Spleen (tissue), 13 donors: ENCODE measurements at regions of chr12 and their contacts with region 1.

Region 1: DNA sequence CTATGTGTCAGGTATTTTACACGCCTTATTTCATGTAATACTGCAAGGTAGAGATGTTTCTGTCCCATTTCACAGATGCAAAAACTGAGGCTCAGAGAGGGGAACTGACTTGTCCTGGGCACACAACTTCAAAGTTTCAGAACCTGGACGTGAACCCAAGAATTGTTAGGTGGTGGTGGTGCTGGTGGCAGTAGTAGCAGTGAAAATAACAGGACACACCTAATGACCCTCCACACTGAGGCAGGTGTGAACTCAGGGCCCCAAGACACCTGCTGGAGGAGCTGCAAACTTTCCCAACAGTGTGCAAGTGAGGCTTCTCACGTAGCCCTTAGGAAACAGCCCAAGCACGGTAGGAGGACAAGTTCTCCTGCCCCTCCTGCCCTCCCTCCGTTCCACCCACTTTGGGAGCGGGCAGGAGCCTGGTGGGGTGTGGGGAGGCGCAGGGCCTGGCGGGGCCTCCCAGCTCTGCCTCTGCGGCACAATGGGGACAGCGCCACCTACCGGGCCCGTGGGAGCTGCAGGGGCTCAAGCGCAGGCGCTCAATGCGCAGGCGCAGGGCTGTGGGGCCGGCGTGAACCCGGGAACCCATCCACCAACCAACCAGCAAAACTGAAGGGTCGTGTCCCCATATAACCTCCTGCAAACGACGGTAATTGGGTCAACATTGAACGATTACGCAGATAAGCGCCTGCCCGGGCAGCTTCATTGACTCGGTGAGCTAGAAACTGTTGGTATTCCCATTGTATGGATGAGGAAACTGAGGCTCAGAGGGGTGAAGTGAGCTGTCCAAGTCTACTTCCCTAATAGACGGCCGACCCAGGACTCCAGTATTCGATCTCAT is 12.0 kb upstream of the TRPV4 start:
- DNase-seq: peak; percentile 98
- H3K4me3 ChIP-seq: peak overlapping the region in 4 of 8 donors; percentile 20 to 46 (median 24)
- H3K27ac ChIP-seq: peak overlapping the region in 6 of 8 donors; percentile 48 to 81 (median 76)
- H3K4me1 ChIP-seq: peaks cover 5 to 40% (median 18%) of the 10 kb centered on the region in 6 donors
- H3K27me3 ChIP-seq: no peaks in the 10 kb centered on the region
- CTCF ChIP-seq: peak; percentile 93 to 100 (median 99)
- POLR2A ChIP-seq: no peak

Region 2: GRCh38 chr12:109927622-109928021 is 82.4 kb after region 1 on chr12:
- intact Hi-C with region 1: loop called (anchors 5 kb)
- DNase-seq: no peak
- H3K4me3 ChIP-seq: no peak overlapping the region
- H3K27ac ChIP-seq: peak overlapping the region in 3 of 8 donors; percentile 55 to 66 (median 66)
- H3K4me1 ChIP-seq: peaks cover 0 to 18% (median 7%) of the 10 kb centered on the region in 6 donors
- H3K27me3 ChIP-seq: no peaks in the 10 kb centered on the region
- CTCF ChIP-seq: peak; percentile 33 to 77 (median 63)
- POLR2A ChIP-seq: no peak